ENCODE measurements at regions of chr5 and their contacts with region 1.

Region 1: DNA sequence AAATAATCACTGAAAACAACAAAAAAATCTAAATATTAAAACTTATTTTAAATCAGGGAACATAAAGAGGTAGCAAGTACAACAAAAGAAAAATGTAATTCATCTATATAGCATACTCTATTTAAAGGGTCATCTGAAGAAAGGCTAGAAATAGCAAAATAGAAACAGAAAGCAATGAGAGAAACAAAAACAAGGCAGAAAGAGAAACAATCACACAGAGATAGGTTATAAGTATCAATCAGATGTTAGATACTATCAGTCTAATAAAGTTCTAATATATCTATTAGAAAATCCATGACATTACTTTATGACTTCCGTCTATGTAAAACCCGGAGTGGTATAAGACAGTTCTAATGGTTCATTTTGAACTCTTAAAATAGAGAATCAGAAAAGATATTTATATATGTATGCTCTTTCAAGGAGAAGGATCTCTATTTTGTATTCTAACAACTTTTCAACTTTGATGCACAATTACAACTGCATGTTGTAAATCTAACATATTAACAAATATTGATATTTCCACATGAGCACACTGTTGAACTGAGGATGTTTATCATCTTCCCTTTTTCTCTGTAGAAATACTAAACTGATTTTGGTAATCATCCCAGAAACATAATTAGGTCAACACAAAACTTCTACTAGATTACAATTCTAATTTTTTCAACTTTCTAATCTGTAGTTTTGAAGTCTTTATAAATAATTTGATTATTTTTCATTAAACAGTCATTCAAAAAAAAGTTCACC is 15.8 kb downstream of the RICTOR start:
- DNase-seq: no peak
- ATAC-seq: no peak
- H3K4me3 ChIP-seq: peak overlapping the region; percentile 20
- H3K4me3 Mint-ChIP-seq: peak overlapping the region; percentile 15 to 79 (median 59)
- H3K27ac ChIP-seq: peak overlapping the region; percentile 41
- H3K27ac Mint-ChIP-seq: peak overlapping the region in 6 of 9 donors; percentile 0 to 80 (median 27)
- H3K4me1 ChIP-seq: peaks cover 11 to 31% of the 10 kb centered on the region in 2 donors
- H3K4me1 Mint-ChIP-seq: peaks cover 38 to 96% (median 79%) of the 10 kb centered on the region in 7 donors
- H3K27me3 ChIP-seq: no peaks in the 10 kb centered on the region
- H3K27me3 Mint-ChIP-seq: no peaks in the 10 kb centered on the region

Region 2: DNA sequence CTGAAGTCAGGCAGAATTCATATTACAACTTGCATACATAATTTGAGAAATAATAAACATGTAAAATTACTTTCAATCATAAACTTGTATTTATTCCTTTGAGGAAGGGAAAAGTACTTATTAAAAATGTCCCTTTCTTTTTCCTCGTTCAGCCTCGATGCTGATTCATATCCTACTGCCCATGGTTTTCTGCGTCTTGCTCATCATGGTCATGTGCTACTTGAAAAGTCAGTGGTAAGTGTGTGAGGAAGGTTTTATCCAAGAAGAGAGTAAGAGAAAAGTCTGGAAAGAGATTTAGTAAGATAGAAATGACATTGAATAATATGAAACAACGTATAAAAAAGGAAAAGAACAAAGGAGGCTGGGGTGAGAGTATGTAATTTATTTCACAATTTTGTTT is 126.6 kb before region 1 on chr5:
- CTCF ChIA-PET with region 1: no interaction called
- POLR2A ChIA-PET with region 1: no interaction called
- intact Hi-C with region 1: no loop called
- DNase-seq: no peak
- ATAC-seq: no peak
- H3K4me3 ChIP-seq: no peak overlapping the region
- H3K4me3 Mint-ChIP-seq: no peak overlapping the region
- H3K27ac ChIP-seq: no peak overlapping the region
- H3K27ac Mint-ChIP-seq: no peak overlapping the region
- H3K4me1 ChIP-seq: no peaks in the 10 kb centered on the region
- H3K4me1 Mint-ChIP-seq: no peaks in the 10 kb centered on the region
- H3K27me3 ChIP-seq: no peaks in the 10 kb centered on the region
- H3K27me3 Mint-ChIP-seq: peaks cover 6 to 12% (median 9%) of the 10 kb centered on the region in 5 donors

Region 3: GRCh38 chr5:39005566-39006232 is 52.7 kb before region 1 on chr5:
- CTCF ChIA-PET with region 1: no interaction called
- POLR2A ChIA-PET with region 1: no interaction called
- intact Hi-C with region 1: no loop called
- DNase-seq: peak in 6 of 9 donors; percentile 13 to 49 (median 34)
- ATAC-seq: peak; percentile 81
- H3K4me3 ChIP-seq: no peak overlapping the region
- H3K4me3 Mint-ChIP-seq: peak overlapping the region in 2 of 10 donors; percentile 10 to 27
- H3K27ac ChIP-seq: no peak overlapping the region
- H3K27ac Mint-ChIP-seq: peak overlapping the region in 8 of 9 donors; percentile 46 to 79 (median 68)
- H3K4me1 ChIP-seq: peaks cover 3 to 4% of the 10 kb centered on the region in 2 donors
- H3K4me1 Mint-ChIP-seq: peaks cover 23 to 71% (median 56%) of the 10 kb centered on the region in 7 donors
- H3K27me3 ChIP-seq: no peaks in the 10 kb centered on the region
- H3K27me3 Mint-ChIP-seq: no peaks in the 10 kb centered on the region

Region 4: GRCh38 chr5:39040875-39041274 is 17.5 kb before region 1 on chr5:
- CTCF ChIA-PET with region 1: no interaction called
- POLR2A ChIA-PET with region 1: no interaction called
- intact Hi-C with region 1: loop called in 1 of 2 experiments (anchors 2 kb)
- DNase-seq: no peak
- ATAC-seq: no peak
- H3K4me3 ChIP-seq: no peak overlapping the region
- H3K4me3 Mint-ChIP-seq: no peak overlapping the region
- H3K27ac ChIP-seq: no peak overlapping the region
- H3K27ac Mint-ChIP-seq: peak overlapping the region in 1 of 9 donors; percentile 32
- H3K4me1 ChIP-seq: peaks cover 4% of the 10 kb centered on the region in 2 donors
- H3K4me1 Mint-ChIP-seq: peaks cover 7 to 76% (median 65%) of the 10 kb centered on the region in 7 donors
- H3K27me3 ChIP-seq: no peaks in the 10 kb centered on the region
- H3K27me3 Mint-ChIP-seq: no peaks in the 10 kb centered on the region